ENCODE measurements at regions of chr15 and their contacts with region 1.

Region 1: DNA sequence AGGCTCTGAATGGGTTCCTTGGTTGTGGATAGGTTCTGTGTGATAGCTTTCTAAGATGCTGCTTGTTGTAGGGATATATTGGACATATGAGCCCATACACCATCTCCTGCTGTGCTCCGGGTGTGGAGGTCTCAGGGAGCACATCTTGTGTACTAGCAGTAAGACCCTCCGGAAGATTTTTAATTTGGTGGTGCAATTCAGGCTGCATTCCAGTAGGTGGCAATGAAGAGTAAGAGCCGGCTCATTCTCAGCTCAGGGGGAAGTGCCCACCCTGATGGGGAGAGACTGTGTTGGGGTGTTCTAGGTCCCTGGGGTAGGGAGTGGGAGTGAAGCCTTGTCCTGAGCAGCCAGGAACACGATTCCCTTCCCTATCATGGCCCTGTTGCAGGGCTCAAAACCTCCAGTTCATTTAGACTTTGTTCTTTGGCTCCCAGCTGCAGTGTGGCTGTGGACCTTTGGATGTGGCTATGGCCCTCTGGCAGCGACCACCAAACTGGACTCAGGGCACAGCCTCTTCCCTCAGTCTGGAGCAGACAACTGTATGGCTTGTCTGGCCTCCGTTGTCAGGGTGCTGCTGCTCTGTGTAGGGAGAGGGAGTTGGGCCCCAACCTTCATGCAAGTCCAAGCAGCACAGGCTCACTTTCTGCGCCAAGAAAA is 104.7 kb downstream of the UNC13C start:
- DNase-seq: peak; percentile 59
- H3K4me3 Mint-ChIP-seq: no peak overlapping the region
- H3K27ac Mint-ChIP-seq: no peak overlapping the region
- H3K4me1 Mint-ChIP-seq: no peaks in the 10 kb centered on the region
- H3K27me3 Mint-ChIP-seq: no peaks in the 10 kb centered on the region

Region 2: DNA sequence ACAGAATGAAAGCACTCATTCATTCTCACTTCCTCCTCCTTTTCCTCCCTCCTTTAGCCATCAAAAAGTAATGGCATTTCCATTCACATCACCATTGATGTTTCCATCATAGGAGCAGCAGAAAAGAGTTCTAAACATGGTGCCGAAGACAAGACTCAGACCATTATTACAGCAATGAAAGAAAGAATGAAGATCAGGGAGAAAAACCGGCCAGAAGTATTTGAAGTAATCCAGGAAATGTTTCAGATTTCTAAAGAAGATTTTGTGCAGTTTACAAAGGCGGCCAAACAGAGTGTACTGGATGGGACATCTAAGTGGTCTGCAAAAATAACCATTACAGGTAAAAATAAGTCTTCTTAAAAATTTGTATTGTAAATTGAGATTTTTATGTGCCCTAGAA is 181.1 kb after region 1 on chr15:
- intact Hi-C with region 1: no loop called
- DNase-seq: no peak
- H3K4me3 Mint-ChIP-seq: no peak overlapping the region
- H3K27ac Mint-ChIP-seq: no peak overlapping the region
- H3K4me1 Mint-ChIP-seq: no peaks in the 10 kb centered on the region
- H3K27me3 Mint-ChIP-seq: no peaks in the 10 kb centered on the region

Region 3: DNA sequence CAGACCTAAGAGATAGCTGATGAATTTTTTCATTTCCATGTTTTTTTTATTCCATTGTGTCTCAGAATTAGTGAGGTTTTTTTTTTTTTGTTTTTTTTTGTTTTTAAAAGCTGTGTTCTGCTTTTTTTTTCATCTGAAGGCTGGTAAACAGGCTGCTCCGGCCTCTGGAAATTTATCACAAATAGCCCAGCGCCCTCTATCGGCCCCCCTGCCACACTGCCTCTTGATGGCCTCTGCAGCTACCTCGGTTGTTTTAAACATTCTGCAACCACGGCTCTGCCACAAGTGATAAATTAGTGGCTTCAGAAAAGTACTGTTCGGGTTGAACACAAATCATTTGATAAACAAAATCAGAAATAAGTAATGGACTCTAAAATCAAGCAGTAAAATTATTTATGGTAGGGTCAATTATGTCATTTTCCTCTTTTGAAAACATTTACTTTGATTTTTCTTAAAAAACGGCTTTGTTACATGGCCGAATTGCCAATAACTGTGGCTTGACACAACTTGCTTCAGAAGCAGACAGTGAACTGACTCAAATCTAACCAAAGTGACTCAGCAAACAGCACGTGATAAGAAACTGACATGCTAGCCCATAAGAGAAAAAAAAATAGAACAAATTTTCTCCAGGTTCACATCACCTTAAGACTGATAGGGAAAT is 1026.0 kb after region 1 on chr15:
- intact Hi-C with region 1: loop called (anchors 10 kb)
- DNase-seq: peak; percentile 88
- H3K4me3 Mint-ChIP-seq: no peak overlapping the region
- H3K27ac Mint-ChIP-seq: no peak overlapping the region
- H3K4me1 Mint-ChIP-seq: no peaks in the 10 kb centered on the region
- H3K27me3 Mint-ChIP-seq: peaks cover 5% of the 10 kb centered on the region